Activated CD4-positive, alpha-beta memory T cell treated with anti-CD3 and anti-CD28 coated beads for 36 hours (primary cell): ENCODE measurements at regions of chr3 and their contacts with region 1.

Region 1: GRCh38 chr3:187802928-187803259 is 57.6 kb upstream of the BCL6 start:
- DNase-seq: peak; percentile 89
- H3K4me3 Mint-ChIP-seq: peak overlapping the region; percentile 54
- H3K27ac Mint-ChIP-seq: peak overlapping the region; percentile 95
- H3K4me1 Mint-ChIP-seq: peaks cover 96% of the 10 kb centered on the region
- H3K27me3 Mint-ChIP-seq: no peaks in the 10 kb centered on the region

Region 2: GRCh38 chr3:187616307-187616972 is 186.5 kb before region 1 on chr3:
- CTCF ChIA-PET with region 1: no interaction called
- POLR2A ChIA-PET with region 1: no interaction called
- intact Hi-C with region 1: no loop called
- DNase-seq: peak; percentile 67
- H3K4me3 Mint-ChIP-seq: no peak overlapping the region
- H3K27ac Mint-ChIP-seq: no peak overlapping the region
- H3K4me1 Mint-ChIP-seq: no peaks in the 10 kb centered on the region
- H3K27me3 Mint-ChIP-seq: peaks cover 9% of the 10 kb centered on the region

Region 3: DNA sequence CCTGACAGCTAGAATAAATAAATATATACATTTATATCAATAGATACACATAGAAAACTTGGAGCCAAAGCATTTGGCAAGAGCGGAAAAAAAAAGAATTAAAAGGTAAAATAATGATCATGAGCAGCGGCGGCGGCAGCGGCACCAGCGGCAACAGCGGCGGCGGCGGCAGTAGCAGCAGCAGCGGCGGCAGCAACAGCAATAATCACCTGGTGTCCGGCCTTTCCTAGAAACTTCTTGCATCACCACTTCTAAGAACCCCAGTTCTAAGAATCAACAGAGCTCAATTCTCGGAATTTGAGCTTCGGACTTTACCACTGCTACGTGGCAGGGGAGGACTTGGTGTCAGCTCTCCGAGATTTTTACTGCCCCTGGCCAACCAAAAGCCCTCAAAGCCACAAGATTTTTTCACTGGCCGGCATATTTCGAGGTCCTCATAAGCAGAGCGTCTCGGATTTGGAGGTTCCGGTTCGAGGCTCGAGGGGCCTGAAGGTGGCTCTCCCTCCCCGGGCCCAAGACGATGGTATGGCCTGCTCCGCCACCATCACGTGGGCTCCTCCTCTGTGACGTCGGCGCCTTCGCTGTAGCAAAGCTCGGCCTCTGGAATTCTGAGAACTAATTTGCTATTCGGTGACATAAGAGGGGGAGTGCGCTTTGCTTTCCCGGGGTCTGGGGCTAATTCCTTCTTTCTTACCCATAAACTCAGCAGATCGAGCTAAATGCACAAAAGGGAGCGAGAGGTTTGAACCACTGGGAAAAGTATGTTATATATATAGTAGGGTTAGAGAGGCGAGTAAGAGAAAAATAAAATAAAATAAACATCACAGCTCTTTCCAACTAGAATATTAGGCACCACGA is 57.5 kb before region 1 on chr3 and contains the start of gene BCL6:
- CTCF ChIA-PET with region 1: interaction called, 44 read pairs
- POLR2A ChIA-PET with region 1: interaction called, 102 read pairs
- intact Hi-C with region 1: loop called (anchors 1 kb)
- DNase-seq: peak; percentile 91
- H3K4me3 Mint-ChIP-seq: peak within 1 kb of the TSS; percentile 90
- H3K27ac Mint-ChIP-seq: peak within 1 kb of the TSS; percentile 99
- H3K4me1 Mint-ChIP-seq: peaks cover 47% of the 10 kb centered on the region
- H3K27me3 Mint-ChIP-seq: no peaks in the 10 kb centered on the region
- total RNA-seq, gene BCL6: 41.4 to 51.3 TPM

Region 4: DNA sequence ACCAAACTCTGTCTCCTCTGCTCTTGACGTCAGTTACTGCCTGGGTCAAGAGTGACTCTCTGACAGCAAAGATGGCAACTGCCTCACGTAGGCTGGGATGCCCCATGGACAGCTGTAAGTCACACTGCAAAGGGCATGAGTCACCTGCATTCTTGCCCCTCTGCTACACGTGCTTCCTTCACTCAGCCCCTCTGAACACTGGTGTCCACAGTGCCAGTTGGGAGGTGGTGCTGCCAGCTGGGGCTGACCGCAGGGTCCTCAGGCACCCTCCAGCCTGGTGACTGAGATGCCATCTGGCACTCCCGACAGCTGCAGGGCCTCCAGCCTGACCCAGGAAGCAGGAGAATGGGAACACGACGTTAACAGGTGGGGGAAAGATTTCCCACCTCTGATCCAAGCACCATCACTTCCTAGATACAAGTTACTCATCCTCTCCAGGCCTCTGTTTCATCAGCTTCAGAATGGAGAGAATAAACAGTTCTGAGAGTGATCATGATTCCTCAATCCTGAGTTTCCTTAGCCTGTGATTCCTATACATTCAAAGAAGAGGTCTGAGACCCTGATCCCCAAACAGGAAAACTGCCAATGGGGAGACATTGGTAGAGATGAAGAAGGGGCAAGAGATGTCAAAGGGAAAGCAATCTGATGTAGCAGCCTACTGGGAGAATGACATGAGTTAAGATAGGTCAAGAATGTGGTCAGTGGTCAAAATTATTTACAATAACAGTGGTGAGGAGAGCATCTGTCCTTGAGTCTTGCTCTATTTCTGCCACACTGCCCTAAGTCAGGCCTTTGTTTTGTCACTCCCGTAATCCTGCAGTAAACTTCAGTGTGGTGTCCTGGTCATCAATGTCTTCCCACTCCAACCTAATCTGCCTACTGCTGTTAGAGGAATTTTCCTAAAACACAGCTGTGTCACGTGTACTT is 28.5 kb after region 1 on chr3:
- CTCF ChIA-PET with region 1: no interaction called
- POLR2A ChIA-PET with region 1: interaction called, 3 read pairs
- intact Hi-C with region 1: loop called (anchors 2 kb)
- DNase-seq: no peak
- H3K4me3 Mint-ChIP-seq: no peak overlapping the region
- H3K27ac Mint-ChIP-seq: no peak overlapping the region
- H3K4me1 Mint-ChIP-seq: peaks cover 27% of the 10 kb centered on the region
- H3K27me3 Mint-ChIP-seq: no peaks in the 10 kb centered on the region

Region 5: GRCh38 chr3:188154014-188154808 is 351.3 kb after region 1 on chr3 and contains the start of gene LPP:
- CTCF ChIA-PET with region 1: interaction called, 3 read pairs
- POLR2A ChIA-PET with region 1: interaction called, 3 read pairs
- intact Hi-C with region 1: loop called (anchors 5 kb)
- DNase-seq: peak; percentile 91
- H3K4me3 Mint-ChIP-seq: peak within 1 kb of the TSS; percentile 88
- H3K27ac Mint-ChIP-seq: peak within 1 kb of the TSS; percentile 97
- H3K4me1 Mint-ChIP-seq: peaks cover 63% of the 10 kb centered on the region
- H3K27me3 Mint-ChIP-seq: no peaks in the 10 kb centered on the region
- total RNA-seq, gene LPP: 41.0 to 43.6 TPM

Region 6: GRCh38 chr3:188294823-188295487 is 492.1 kb after region 1 on chr3:
- CTCF ChIA-PET with region 1: no interaction called
- POLR2A ChIA-PET with region 1: interaction called, 4 read pairs
- intact Hi-C with region 1: loop called (anchors 5 kb)
- DNase-seq: no peak
- H3K4me3 Mint-ChIP-seq: no peak overlapping the region
- H3K27ac Mint-ChIP-seq: peak overlapping the region; percentile 72
- H3K4me1 Mint-ChIP-seq: peaks cover 79% of the 10 kb centered on the region
- H3K27me3 Mint-ChIP-seq: no peaks in the 10 kb centered on the region

Region 7: GRCh38 chr3:188954590-188955208 is 1151.8 kb after region 1 on chr3:
- CTCF ChIA-PET with region 1: no interaction called
- POLR2A ChIA-PET with region 1: no interaction called
- intact Hi-C with region 1: loop called (anchors 10 kb)
- DNase-seq: peak; percentile 85
- H3K4me3 Mint-ChIP-seq: no peak overlapping the region
- H3K27ac Mint-ChIP-seq: no peak overlapping the region
- H3K4me1 Mint-ChIP-seq: peaks cover 28% of the 10 kb centered on the region
- H3K27me3 Mint-ChIP-seq: peaks cover 4% of the 10 kb centered on the region